Activated CD8-positive, alpha-beta memory T cell treated with anti-CD3 and anti-CD28 coated beads, Interleukin-2, amount 10 ng/mL, durations not matched to agents 7 days and 5 days (primary cell): ENCODE measurements at regions of chr12 and their contacts with region 1.

Region 1: DNA sequence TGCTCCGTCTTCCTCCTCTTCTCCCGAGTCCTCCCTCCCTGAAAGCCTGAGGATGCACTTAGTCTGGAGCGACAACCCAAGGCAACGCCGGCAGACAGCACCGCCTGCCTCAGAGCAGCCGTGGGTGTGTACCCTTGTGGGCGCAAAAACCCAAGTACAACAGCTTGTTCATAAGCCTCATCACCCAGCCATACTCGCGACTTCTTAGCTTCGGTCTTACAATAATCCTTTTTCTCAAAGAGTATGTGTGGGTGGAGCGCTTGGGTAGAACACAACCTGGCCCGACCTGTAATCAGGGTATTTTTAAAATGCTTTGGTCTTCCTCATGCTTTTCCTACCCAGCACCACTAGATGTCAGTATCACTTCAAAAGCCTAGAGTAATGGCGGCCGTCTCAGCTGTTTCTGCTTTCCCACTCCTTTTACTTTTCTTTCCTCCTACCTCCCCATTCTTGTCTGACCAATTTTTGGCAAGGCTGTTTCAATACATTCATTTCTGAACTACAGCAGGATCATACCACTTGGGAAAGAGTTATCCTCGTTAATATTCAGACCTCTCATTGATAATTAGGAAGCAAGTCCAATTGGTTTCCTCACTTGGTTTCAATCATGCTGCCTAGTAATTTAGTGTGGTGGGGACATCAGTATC is 198.9 kb downstream of the EPS8 start:
- DNase-seq: peak; percentile 60
- ATAC-seq: peak; percentile 92
- H3K4me3 Mint-ChIP-seq: peak overlapping the region; percentile 54
- H3K27ac Mint-ChIP-seq: peak overlapping the region; percentile 5
- H3K4me1 Mint-ChIP-seq: peaks cover 11% of the 10 kb centered on the region
- H3K27me3 Mint-ChIP-seq: peaks cover 39% of the 10 kb centered on the region

Region 2: GRCh38 chr12:15505616-15506015 is 84.7 kb before region 1 on chr12:
- CTCF ChIA-PET with region 1: no interaction called
- DNase-seq: no peak
- ATAC-seq: no peak
- H3K4me3 Mint-ChIP-seq: no peak overlapping the region
- H3K27ac Mint-ChIP-seq: no peak overlapping the region
- H3K4me1 Mint-ChIP-seq: no peaks in the 10 kb centered on the region
- H3K27me3 Mint-ChIP-seq: peaks cover 30% of the 10 kb centered on the region

Region 3: GRCh38 chr12:15575671-15576541 is 14.4 kb before region 1 on chr12:
- CTCF ChIA-PET with region 1: interaction called, 24 read pairs
- DNase-seq: no peak
- ATAC-seq: no peak
- H3K4me3 Mint-ChIP-seq: no peak overlapping the region
- H3K27ac Mint-ChIP-seq: no peak overlapping the region
- H3K4me1 Mint-ChIP-seq: peaks cover 16% of the 10 kb centered on the region
- H3K27me3 Mint-ChIP-seq: peaks cover 6% of the 10 kb centered on the region

Region 4: DNA sequence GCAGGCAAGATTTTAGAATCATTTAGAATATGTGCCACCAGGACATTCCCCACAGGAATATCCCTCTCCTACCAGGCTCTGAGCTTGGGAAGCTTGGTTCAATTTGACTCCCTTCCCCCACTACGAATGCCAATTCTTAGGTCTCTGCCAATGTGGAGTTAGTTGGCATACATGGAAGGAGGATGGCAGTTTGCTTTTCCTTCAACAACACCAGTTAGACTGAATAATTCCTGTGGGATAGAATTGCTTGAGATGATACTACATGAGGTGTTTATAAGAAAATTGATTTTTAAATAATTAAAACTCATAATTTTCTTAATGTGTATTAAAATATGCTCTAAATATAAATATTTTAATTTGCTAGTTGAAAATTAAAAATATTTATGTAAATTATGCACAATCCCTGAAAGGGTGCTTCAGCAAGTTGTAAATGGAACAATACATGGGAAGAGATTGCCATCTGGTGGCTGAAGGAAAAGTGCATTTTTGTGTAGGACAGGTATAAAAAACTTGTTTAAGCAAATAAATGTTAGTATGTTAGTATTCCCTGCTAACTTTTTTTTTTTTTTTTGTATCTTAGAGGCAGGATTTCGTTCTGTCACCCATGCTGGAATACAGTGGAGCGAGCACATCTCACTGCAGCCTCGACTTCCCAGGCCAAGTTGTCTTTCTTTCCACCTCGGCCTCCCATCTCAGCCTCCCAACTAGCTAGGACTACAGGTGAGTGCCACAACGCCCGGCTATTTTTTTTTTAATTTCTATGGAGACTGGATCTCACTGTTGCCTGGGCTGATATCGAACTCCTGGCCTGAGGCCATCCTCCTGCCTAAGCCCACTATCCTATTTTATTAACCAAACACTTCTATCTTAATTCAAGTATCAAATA is 266.0 kb after region 1 on chr12:
- CTCF ChIA-PET with region 1: interaction called, 92 read pairs
- DNase-seq: peak; percentile 56
- ATAC-seq: peak; percentile 42
- H3K4me3 Mint-ChIP-seq: no peak overlapping the region
- H3K27ac Mint-ChIP-seq: no peak overlapping the region
- H3K4me1 Mint-ChIP-seq: no peaks in the 10 kb centered on the region
- H3K27me3 Mint-ChIP-seq: peaks cover 39% of the 10 kb centered on the region